ENCODE measurements at regions of chrX and their contacts with region 1.

Region 1: DNA sequence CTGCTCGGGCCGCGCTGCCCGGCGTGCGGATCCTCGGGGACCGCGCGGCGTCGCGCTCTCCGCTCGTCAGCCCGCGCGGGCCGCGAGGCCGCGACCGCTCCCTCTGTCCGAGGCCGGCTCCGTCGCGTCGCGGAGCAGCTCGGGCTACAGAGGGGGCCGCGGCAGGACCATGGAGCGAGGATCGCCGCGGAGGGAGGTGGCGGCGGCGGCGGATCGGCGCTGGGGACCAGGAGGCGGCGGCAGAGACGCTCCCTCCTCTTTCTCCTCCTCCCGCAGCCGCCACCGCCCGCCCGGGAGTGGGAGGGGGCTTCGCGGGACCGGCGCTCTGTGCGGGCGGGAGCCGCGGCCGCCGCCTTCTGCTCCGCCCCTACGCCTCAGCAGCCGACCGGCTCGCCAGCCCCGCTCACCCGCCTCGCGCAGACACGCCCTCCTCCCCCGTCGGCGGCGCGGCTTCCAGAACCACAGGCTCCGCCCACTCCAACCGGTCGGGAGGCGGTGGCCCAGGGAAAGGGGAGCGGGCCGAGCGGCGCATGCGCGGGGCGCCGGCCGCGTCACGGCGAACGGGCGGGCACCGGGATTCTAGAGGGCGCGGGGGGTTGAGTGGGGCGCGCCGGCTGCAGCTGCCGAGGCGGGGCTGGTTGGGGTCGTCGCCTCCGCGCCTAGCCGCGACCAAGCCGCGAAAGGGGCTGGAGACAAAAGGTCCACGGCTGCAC is at the start of gene CASK:
- DNase-seq: peak; percentile 93 to 95
- H3K4me3 ChIP-seq: peak within 1 kb of the TSS; percentile 63
- H3K4me3 Mint-ChIP-seq: peak within 1 kb of the TSS; percentile 98
- H3K27ac Mint-ChIP-seq: peak within 1 kb of the TSS; percentile 88
- H3K4me1 ChIP-seq: peaks cover 6% of the 10 kb centered on the region; the same call in 1 of the 2 replicates
- H3K4me1 Mint-ChIP-seq: no peaks in the 10 kb centered on the region
- H3K27me3 ChIP-seq: no peaks in the 10 kb centered on the region
- H3K27me3 Mint-ChIP-seq: no peaks in the 10 kb centered on the region
- CTCF ChIP-seq: peak in 1 of 2 experiments; percentile 13
- total RNA-seq, gene CASK: 163 and 174 TPM in 2 replicates

Region 2: GRCh38 chrX:41796577-41796976 is 126.8 kb before region 1 on chrX:
- CTCF ChIA-PET with region 1: no interaction called
- POLR2A ChIA-PET with region 1: no interaction called
- intact Hi-C with region 1: loop called (anchors 5 kb)
- DNase-seq: no peak
- H3K4me3 ChIP-seq: no peak overlapping the region
- H3K4me3 Mint-ChIP-seq: no peak overlapping the region
- H3K27ac Mint-ChIP-seq: no peak overlapping the region
- H3K4me1 ChIP-seq: no peaks in the 10 kb centered on the region
- H3K4me1 Mint-ChIP-seq: peaks cover 12% of the 10 kb centered on the region
- H3K27me3 ChIP-seq: no peaks in the 10 kb centered on the region
- H3K27me3 Mint-ChIP-seq: no peaks in the 10 kb centered on the region
- CTCF ChIP-seq: no peak

Region 3: DNA sequence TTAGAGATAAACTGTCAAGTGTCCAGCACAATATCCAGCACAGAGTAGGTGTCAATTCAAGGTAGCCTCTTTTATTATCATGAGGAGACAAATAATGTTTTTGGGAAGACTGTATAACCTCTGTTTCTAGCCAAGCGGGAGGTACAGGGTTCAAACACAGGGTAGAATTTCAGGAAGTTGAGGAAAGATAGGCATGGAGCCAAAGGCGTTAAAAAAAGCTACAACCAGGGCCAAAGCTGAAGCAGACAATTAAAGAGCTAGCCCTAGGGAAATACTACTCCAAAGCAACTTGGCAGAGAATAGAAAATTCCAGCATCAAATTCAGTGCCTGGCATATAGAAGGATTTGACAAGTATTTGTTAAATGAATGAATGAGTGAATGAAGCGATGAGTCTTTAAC is 39.9 kb after region 1 on chrX:
- CTCF ChIA-PET with region 1: no interaction called
- POLR2A ChIA-PET with region 1: no interaction called
- intact Hi-C with region 1: loop called (anchors 1 kb)
- DNase-seq: no peak
- H3K4me3 ChIP-seq: no peak overlapping the region
- H3K4me3 Mint-ChIP-seq: no peak overlapping the region
- H3K27ac Mint-ChIP-seq: peak overlapping the region; percentile 23
- H3K4me1 ChIP-seq: peaks cover 36% of the 10 kb centered on the region
- H3K4me1 Mint-ChIP-seq: peaks cover 40% of the 10 kb centered on the region
- H3K27me3 ChIP-seq: no peaks in the 10 kb centered on the region
- H3K27me3 Mint-ChIP-seq: no peaks in the 10 kb centered on the region
- CTCF ChIP-seq: no peak

Region 4: DNA sequence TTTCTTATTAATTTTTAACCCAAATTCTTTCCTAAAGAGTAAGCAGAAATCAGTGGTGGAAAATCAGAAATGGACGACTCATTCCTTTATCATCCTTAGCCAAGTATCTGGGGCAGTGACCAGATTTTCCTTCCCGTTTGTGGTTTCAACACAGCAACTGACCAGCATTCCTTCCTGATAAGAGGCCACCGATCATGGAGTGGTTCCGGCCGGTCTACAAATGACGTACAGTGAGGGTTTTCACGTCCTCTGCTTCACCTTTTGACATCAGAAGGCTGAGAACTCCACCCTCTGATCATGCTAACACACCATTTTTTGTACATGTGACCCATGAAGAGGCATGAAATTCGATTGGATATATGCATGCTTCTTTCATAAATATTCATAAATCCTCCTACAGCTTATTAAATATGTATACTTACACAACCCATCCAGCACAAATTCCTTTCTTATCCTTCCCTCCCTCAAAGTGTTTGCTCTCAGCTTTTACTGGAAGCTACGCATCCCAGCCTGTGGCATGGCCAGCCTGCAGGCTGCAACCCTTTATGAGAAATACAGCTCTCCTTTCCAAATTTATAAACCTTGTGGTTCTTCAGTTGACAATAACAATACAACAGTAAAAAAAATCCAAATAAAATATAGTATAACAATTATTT is 173.0 kb after region 1 on chrX:
- CTCF ChIA-PET with region 1: no interaction called
- POLR2A ChIA-PET with region 1: interaction called, 6 read pairs
- intact Hi-C with region 1: loop called (anchors 1 kb)
- DNase-seq: peak; percentile 82 to 92
- H3K4me3 ChIP-seq: no peak overlapping the region
- H3K4me3 Mint-ChIP-seq: peak overlapping the region; percentile 59
- H3K27ac Mint-ChIP-seq: peak overlapping the region; percentile 92
- H3K4me1 ChIP-seq: peaks cover 48% of the 10 kb centered on the region
- H3K4me1 Mint-ChIP-seq: peaks cover 31% of the 10 kb centered on the region
- H3K27me3 ChIP-seq: no peaks in the 10 kb centered on the region
- H3K27me3 Mint-ChIP-seq: no peaks in the 10 kb centered on the region
- CTCF ChIP-seq: no peak

Region 5: GRCh38 chrX:42176789-42177188 is 253.4 kb after region 1 on chrX:
- CTCF ChIA-PET with region 1: no interaction called
- POLR2A ChIA-PET with region 1: no interaction called
- intact Hi-C with region 1: no loop called
- DNase-seq: no peak
- H3K4me3 ChIP-seq: no peak overlapping the region
- H3K4me3 Mint-ChIP-seq: no peak overlapping the region
- H3K27ac Mint-ChIP-seq: no peak overlapping the region
- H3K4me1 ChIP-seq: no peaks in the 10 kb centered on the region
- H3K4me1 Mint-ChIP-seq: no peaks in the 10 kb centered on the region
- H3K27me3 ChIP-seq: no peaks in the 10 kb centered on the region
- H3K27me3 Mint-ChIP-seq: no peaks in the 10 kb centered on the region
- CTCF ChIP-seq: no peak